Right ventricle myocardium superior (tissue), 1 donor: ENCODE measurements at regions of chr20 and their contacts with region 1.

Region 1: DNA sequence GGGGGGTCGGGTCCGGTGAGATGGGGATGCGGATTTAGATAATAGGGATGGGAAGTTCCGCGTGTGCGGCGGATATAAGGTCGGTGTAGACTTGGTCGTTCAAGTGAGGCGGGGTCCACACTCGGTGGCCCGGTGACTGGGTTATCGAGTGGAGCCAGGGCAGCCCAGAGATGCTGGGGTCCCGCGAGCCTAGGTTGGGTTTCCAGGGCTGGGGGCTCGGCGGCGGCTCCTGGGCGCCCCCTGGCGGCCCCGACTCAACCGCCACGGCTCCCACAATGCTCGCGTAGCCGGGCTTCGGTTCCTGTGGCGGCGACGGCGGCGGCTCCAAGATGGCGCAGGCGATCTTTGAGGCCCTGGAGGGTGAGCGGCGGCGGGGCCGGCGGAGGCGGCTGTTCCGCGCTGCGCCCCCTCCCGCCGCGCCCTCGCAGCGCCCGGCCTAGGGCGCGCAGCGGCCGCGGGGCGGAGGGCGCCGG is at the start of gene ZNF341:
- DNase-seq: peak; percentile 94
- ATAC-seq: peak; percentile 85
- total RNA-seq, gene ZNF341: 1.9 TPM

Region 2: DNA sequence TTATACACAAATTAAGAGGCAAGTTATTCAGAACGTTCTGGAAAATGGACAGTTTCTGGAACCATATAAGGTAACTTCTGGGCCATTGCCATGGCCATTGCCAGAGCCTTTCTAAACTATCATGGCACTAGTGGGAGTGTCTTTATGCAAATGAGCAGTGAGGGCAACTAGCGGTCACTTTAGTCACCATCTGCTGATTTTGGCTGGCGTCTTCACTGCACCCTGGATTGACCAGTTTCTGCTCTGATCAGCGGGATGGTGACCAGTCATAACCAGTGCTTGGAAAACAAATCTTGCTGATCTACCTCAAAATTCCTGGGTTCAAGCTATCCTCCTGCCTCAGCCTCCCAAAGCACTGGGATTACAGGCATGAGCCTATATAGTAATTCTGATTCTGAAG is 280.9 kb before region 1 on chr20:
- intact Hi-C with region 1: loop called (anchors 10 kb)
- DNase-seq: no peak
- ATAC-seq: no peak

Region 3: GRCh38 chr20:33666293-33667244 is 65.2 kb before region 1 on chr20 and contains the start of gene ACTL10:
- intact Hi-C with region 1: no loop called
- DNase-seq: peak; percentile 99
- ATAC-seq: peak; percentile 75
- total RNA-seq, gene ACTL10: 0.22 TPM